ENCODE measurements at regions of chr13 and their contacts with region 1.

Region 1: DNA sequence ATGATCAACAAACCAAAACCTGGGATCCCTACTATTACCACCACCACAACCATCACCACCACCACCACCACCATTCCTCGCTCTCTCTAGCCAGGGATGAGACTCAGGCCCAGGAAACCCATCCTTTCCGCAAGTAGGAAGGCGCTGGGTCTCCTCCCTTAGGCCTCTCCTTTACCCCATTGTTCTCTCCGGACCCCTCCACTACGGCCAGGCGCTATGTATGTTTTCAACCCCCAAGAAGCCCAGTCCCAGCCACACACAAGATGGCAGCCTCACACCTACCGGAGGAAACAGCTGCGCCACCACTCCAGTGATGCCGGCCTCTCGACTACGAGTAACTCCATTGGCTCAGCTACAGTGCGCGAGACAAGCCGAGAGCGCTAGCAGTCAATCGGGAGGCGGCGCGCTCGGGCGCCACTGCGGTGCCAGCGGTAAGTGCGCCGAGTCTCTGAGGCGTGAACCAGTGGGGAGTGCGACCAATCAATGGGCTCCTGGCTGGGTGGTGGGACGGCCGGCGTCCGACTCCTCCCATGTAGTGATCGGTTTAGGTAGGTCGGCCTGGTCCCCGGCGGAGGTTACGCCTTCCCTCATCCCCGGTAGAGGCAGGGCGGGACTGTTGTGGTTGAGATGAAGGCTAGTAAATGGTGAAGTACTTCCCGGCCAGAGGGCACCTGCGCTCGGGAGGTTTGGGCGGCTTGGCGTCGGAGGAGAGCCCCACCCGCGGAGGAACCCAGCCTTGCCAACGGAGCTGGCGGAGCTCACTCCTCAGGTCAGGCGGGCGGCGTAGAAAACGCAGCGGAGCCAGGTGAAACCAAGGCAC is at the starts of genes CAB39L and SETDB2:
- DNase-seq: peak; percentile 95
- H3K4me3 ChIP-seq: peak within 1 kb of the TSS; percentile 71
- H3K27me3 ChIP-seq: no peaks in the 10 kb centered on the region
- CTCF ChIP-seq: peak; percentile 49
- polyA plus RNA-seq, gene CAB39L: 6.5 and 9.4 TPM in 2 replicates
- polyA plus RNA-seq, gene SETDB2: 2.3 and 4.9 TPM in 2 replicates

Region 2: GRCh38 chr13:49347646-49348385 is 96.1 kb before region 1 on chr13:
- CTCF ChIA-PET with region 1: no interaction called
- POLR2A ChIA-PET with region 1: no interaction called
- DNase-seq: no peak
- H3K4me3 ChIP-seq: no peak overlapping the region
- H3K27me3 ChIP-seq: no peaks in the 10 kb centered on the region
- CTCF ChIP-seq: no peak

Region 3: DNA sequence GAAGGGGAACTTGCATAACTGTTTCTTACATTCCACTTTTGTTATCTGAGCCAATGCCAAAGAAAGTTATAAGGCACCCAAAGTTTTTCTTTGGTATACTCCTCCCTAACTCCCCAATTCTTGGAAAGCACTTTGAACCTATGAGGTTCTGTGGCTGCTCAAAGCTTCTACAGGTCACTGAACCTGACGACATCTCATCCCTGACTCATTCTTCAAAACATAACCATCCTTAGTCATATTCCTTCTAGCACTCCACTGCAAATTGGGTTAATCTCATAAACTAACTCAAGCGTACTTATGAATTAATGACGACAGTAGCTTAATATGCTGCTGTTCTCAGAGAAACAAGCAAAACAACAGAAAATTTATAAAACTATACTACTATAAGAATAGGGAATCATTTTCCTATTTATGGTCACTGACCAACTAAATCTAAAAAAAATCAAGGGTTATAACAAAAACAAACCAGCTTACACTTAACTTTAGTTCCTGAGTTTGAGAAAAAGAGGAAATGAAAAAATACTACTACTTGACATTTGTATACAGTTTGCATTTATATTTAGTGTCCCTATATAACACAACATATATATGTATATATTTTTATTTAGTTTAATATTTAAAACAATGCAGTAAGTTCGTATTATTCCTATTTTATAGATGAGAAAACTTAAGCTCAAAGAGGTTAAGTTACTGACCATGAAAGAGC is 69.2 kb before region 1 on chr13:
- CTCF ChIA-PET with region 1: no interaction called
- POLR2A ChIA-PET with region 1: no interaction called
- DNase-seq: peak; percentile 53
- H3K4me3 ChIP-seq: no peak overlapping the region
- H3K27me3 ChIP-seq: no peaks in the 10 kb centered on the region
- CTCF ChIP-seq: no peak

Region 4: GRCh38 chr13:49428051-49428763 is 15.7 kb before region 1 on chr13:
- CTCF ChIA-PET with region 1: no interaction called
- POLR2A ChIA-PET with region 1: no interaction called
- DNase-seq: no peak
- H3K4me3 ChIP-seq: no peak overlapping the region
- H3K27me3 ChIP-seq: no peaks in the 10 kb centered on the region
- CTCF ChIP-seq: no peak

Region 5: DNA sequence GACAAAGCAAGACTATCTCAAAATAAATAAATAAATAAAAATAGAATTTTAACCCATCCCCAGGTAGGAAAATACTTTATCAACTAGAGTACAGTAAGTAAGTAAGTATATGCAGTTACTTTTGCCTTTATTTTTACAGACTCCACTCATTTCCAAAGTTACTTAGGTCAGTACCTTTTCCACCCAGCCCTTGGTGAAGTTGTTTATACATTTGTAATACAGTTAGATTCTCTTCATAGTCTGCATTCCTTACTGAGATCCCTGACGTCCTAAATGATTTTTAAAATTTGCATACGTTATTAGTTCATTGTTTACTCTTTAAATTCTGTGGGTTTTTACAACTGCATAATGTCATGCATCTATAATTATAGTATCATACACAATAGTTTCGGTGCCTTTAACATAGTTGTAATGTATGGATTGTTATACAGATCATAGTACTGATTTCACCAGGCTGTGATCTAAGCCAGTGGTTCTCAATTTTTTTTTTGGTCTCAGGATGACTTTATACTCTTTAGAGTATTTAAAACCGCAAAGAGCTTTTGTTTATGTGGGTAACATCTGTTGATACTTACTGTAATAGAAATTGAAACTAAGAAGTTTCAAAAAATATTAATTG is 10.6 kb after region 1 on chr13:
- CTCF ChIA-PET with region 1: no interaction called
- POLR2A ChIA-PET with region 1: no interaction called
- DNase-seq: peak; percentile 48
- H3K4me3 ChIP-seq: peak overlapping the region; percentile 13
- H3K27me3 ChIP-seq: no peaks in the 10 kb centered on the region
- CTCF ChIP-seq: no peak

Region 6: DNA sequence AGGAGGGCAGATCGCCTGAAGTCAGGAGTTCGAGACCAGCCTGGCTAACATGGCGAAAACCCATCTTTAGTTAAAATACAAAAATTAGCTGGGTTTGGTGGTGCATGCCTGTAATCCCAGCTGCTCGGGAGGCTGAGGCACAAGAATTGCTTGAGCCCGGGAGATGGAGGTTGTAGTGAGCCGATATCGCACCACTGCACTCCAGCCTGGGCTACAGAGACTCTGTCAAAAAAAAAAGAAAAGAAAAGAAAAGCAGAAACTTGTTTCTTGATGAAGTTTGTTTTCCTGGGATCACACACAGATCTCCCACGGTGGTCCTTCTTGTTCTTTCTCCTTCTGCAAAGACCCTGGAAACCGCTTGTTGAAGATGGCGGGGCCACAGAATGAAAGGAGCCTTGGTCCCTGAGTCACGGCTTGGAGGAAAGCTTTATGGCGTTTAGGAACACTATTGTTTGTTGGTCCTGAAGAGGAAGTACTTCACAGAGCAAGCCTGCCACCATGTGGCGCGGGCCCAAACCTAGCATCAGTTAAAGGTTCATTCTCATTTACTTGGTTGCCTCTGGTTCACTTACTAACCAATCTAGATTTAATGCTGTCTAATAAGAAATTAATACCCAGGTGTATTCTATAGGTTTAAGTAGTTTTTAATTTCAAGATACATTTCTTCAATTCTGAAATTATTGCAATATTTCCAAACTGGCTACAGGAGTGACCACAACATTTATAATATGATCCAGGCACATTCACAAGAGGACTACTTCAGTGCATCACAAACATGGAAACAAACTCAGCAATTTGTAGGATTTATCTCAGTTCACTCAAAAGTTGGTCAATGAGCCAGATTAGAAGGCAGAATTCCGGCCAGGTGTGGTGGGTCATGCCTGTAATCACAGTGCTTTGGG is 163.1 kb after region 1 on chr13:
- CTCF ChIA-PET with region 1: interaction called, 10 read pairs
- POLR2A ChIA-PET with region 1: no interaction called
- DNase-seq: peak; percentile 47
- H3K4me3 ChIP-seq: no peak overlapping the region
- H3K27me3 ChIP-seq: peaks cover 1% of the 10 kb centered on the region
- CTCF ChIP-seq: peak; percentile 84